ENCODE measurements at regions of chr12 and their contacts with region 1.

Region 1: DNA sequence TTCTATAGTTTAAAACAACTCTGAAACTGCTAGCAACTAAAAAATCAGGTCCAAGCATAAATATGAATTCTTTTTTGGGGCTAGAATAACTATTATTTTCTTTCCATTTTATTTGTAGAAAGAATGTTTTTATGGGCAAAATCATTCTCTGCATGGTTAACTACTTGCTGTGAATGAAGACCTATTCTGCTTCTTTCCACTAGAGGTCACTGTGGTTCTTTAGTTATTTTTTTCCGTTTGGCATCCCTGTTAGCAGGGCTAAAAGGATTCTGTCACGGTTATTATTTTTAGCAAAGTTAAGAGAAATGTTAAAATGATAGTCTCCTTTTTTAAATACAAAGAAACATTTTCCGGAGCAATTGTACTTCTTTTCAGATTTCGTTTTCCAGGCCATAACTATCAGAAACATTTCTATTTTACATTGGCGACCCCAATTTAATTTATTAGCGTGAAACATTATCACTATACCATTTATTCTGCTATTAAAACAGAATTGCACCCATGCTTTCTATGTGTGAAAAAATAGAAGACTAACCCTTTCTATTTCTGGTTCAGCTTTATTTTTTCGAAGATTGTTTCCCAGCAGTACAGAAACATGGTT is 404.8 kb downstream of the ATP23 start:
- DNase-seq: no peak
- ATAC-seq: peak; percentile 53 to 72
- H3K4me3 ChIP-seq: no peak overlapping the region
- H3K27ac ChIP-seq: no peak overlapping the region
- H3K4me1 ChIP-seq: peaks cover 0 to 3% of the 10 kb centered on the region in 2 donors
- H3K27me3 ChIP-seq: no peaks in the 10 kb centered on the region
- CTCF ChIP-seq: peak; percentile 52 to 83 (median 68)
- POLR2A ChIP-seq: no peak

Region 2: DNA sequence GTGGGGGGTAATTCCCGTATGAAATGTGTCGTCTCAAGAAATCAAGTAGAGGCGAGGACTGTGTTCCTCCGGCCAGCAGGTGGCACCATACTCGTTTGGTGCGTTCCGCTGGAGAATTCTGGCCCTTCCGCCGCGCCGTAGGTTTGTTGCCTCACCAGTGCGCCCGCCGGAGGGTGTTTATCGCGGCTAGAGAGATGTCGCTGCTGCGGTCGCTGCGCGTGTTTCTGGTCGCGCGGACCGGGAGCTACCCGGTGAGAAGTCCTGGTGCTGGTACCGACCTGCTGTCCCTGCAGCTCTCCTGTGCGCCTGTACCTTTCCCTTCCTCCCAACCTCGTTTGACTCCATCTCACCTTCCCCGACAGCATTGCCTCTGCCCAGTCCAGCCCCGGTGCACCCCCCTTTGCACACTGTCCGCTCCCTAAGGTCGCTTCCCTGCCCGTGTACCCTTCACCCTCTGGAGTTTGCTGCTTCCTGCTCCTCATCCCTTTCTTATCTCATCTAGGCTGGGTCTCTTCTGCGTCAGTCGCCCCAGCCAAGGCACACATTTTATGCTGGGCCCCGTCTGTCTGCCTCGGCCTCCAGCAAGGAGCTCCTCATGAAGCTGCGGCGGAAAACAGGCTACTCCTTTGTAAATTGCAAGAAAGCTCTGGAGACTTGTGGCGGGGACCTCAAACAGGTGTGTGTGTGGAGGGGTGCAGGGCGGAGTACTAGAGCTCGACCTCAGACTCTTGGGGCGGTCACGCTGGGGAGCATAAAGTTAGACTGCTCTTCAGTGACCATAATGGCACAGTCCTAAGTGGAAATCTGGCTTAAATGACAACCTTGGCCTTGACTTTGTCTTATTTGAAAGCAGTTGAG is 563.3 kb before region 1 on chr12 and contains the start of gene TSFM:
- in situ Hi-C with region 1: no loop called
- intact Hi-C with region 1: no loop called
- DNase-seq: peak; percentile 93 to 94
- ATAC-seq: peak; percentile 96
- H3K4me3 ChIP-seq: peak within 1 kb of the TSS; percentile 89 to 98 (median 94)
- H3K27ac ChIP-seq: peak within 1 kb of the TSS; percentile 80 to 89 (median 85)
- H3K4me1 ChIP-seq: peaks cover 9 to 15% of the 10 kb centered on the region in 2 donors
- H3K27me3 ChIP-seq: no peaks in the 10 kb centered on the region
- CTCF ChIP-seq: peak; percentile 95 to 99 (median 97)
- POLR2A ChIP-seq: peak; percentile 56 to 75
- total RNA-seq, gene TSFM: 37.6 to 47.5 (median 40.1) TPM

Region 3: GRCh38 chr12:57983146-57983857 is 362.8 kb before region 1 on chr12:
- in situ Hi-C with region 1: loop called in 2 of 4 experiments (anchors 25 kb)
- intact Hi-C with region 1: no loop called
- DNase-seq: no peak
- ATAC-seq: no peak
- H3K4me3 ChIP-seq: no peak overlapping the region
- H3K27ac ChIP-seq: no peak overlapping the region
- H3K4me1 ChIP-seq: no peaks in the 10 kb centered on the region
- H3K27me3 ChIP-seq: no peaks in the 10 kb centered on the region
- CTCF ChIP-seq: peak in 4 of 5 experiments; percentile 38 to 62 (median 48)
- POLR2A ChIP-seq: no peak

Region 4: DNA sequence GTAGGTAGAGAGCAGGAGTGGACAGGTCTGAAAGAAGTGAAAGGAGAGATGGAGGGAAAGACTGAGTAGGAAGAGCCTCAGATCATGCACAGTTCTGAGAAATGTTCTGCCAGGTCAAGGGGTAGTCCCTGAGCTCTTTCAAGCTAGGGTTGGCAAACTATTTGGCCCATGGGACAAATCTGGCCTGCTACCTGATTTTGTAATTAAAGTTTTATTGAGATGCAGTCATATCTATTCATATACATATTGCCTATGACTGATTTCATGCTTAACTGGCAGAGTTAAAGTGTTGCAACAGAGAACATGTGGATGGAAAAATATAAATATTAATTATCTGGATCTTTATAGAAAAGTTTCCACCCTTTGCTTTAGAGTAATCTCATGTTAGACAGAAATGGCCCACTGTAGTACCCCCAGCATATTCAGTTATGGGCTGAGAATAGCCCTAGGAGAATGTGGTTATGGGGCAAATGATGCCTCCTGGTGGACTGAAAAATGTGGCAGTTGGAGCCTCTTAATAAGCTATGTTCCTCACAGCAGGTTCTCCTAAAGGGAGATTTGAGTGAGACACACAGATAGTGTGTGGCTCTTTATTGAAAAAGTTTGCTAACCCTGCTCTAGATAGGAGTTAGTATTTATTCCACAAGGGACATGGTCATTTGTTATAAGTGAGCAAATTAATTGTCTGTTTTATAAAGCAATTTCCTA is 97.3 kb after region 1 on chr12:
- in situ Hi-C with region 1: no loop called
- intact Hi-C with region 1: loop called (anchors 10 kb)
- DNase-seq: no peak
- ATAC-seq: peak in 1 of 2 donors; percentile 51
- H3K4me3 ChIP-seq: no peak overlapping the region
- H3K27ac ChIP-seq: peak overlapping the region in 3 of 4 donors; percentile 27 to 71 (median 33)
- H3K4me1 ChIP-seq: no peaks in the 10 kb centered on the region
- H3K27me3 ChIP-seq: no peaks in the 10 kb centered on the region
- CTCF ChIP-seq: peak in 2 of 5 experiments; percentile 26 to 38
- POLR2A ChIP-seq: no peak

Region 5: GRCh38 chr12:58540480-58541299 is 194.6 kb after region 1 on chr12:
- in situ Hi-C with region 1: no loop called
- intact Hi-C with region 1: loop called (anchors 10 kb)
- DNase-seq: peak; percentile 14 to 58
- ATAC-seq: peak; percentile 52 to 88
- H3K4me3 ChIP-seq: no peak overlapping the region
- H3K27ac ChIP-seq: no peak overlapping the region
- H3K4me1 ChIP-seq: no peaks in the 10 kb centered on the region
- H3K27me3 ChIP-seq: no peaks in the 10 kb centered on the region
- CTCF ChIP-seq: peak; percentile 42 to 77 (median 55)
- POLR2A ChIP-seq: no peak

Region 6: DNA sequence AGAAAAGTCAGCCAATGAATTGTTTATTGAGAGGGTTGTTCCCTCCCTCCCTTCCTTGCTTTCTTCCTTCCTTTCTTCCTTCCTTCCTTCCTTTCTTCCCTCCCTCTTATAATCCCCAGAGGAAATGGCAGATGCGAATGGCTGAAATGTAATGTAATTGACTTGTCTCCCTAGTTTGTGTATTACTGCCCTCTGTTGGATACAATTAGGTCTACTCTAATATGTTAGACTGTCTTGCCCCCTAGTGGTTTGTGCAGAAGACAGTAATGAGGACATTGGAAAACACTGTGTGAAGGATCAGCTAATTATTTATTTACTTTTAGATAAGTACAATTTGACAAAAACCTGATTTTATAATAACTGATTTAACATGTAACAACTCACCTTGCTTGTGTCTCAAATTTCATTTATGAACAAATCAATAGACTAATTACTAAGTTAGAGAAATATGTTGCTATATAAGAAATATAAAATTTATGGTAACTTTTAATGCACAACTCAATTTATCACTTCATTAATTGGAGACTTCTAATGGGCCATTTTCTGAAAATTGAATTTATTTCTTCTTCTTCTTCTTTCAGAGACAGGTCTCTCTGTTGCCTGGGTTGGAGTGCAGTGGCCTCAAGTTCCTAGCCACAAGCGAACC is 804.0 kb after region 1 on chr12:
- in situ Hi-C with region 1: loop called (anchors 5 to 10 kb)
- intact Hi-C with region 1: loop called (anchors 10 kb)
- DNase-seq: no peak
- ATAC-seq: peak; percentile 91 to 95
- H3K4me3 ChIP-seq: no peak overlapping the region
- H3K27ac ChIP-seq: no peak overlapping the region
- H3K4me1 ChIP-seq: peaks cover 0 to 2% of the 10 kb centered on the region in 2 donors
- H3K27me3 ChIP-seq: no peaks in the 10 kb centered on the region
- CTCF ChIP-seq: peak; percentile 67 to 92 (median 85)
- POLR2A ChIP-seq: no peak

Measured in gastrocnemius medialis (tissue), 4 donors.